Naive thymus-derived CD4-positive, alpha-beta T cell (primary cell): ENCODE measurements at regions of chr1 and their contacts with region 1.

Region 1: GRCh38 chr1:3796215-3797061 is at the start of gene LRRC47:
- DNase-seq: peak; percentile 89 to 97 (median 94)
- ATAC-seq: peak; percentile 100
- H3K4me3 ChIP-seq: peak within 1 kb of the TSS; percentile 74
- H3K4me3 Mint-ChIP-seq: peak within 1 kb of the TSS; percentile 88 to 98 (median 93)
- H3K27ac ChIP-seq: peak within 1 kb of the TSS; percentile 69
- H3K27ac Mint-ChIP-seq: peak within 1 kb of the TSS; percentile 87 to 97 (median 93)
- H3K4me1 ChIP-seq: peaks cover 22 to 28% of the 10 kb centered on the region in 2 donors
- H3K4me1 Mint-ChIP-seq: peaks cover 8 to 52% (median 42%) of the 10 kb centered on the region in 7 donors
- H3K27me3 ChIP-seq: no peaks in the 10 kb centered on the region
- H3K27me3 Mint-ChIP-seq: peaks cover 9 to 11% (median 10%) of the 10 kb centered on the region in 5 donors
- total RNA-seq, gene LRRC47: 38.2 to 60.2 (median 43.9) TPM

Region 2: GRCh38 chr1:3491291-3492246 is 304.9 kb before region 1 on chr1:
- CTCF ChIA-PET with region 1: no interaction called
- POLR2A ChIA-PET with region 1: no interaction called
- intact Hi-C with region 1: no loop called
- DNase-seq: peak; percentile 65 to 90 (median 83)
- ATAC-seq: peak; percentile 96
- H3K4me3 ChIP-seq: no peak overlapping the region
- H3K4me3 Mint-ChIP-seq: peak overlapping the region in 7 of 10 donors; percentile 26 to 76 (median 62)
- H3K27ac ChIP-seq: no peak overlapping the region
- H3K27ac Mint-ChIP-seq: peak overlapping the region in 2 of 9 donors; percentile 28 to 38
- H3K4me1 ChIP-seq: no peaks in the 10 kb centered on the region
- H3K4me1 Mint-ChIP-seq: peaks cover 2 to 7% (median 5%) of the 10 kb centered on the region in 7 donors
- H3K27me3 ChIP-seq: no peaks in the 10 kb centered on the region
- H3K27me3 Mint-ChIP-seq: no peaks in the 10 kb centered on the region

Region 3: GRCh38 chr1:3727042-3727824 is 69.2 kb before region 1 on chr1:
- CTCF ChIA-PET with region 1: no interaction called
- POLR2A ChIA-PET with region 1: no interaction called
- intact Hi-C with region 1: no loop called
- DNase-seq: no peak
- ATAC-seq: peak; percentile 14
- H3K4me3 ChIP-seq: no peak overlapping the region
- H3K4me3 Mint-ChIP-seq: no peak overlapping the region
- H3K27ac ChIP-seq: no peak overlapping the region
- H3K27ac Mint-ChIP-seq: no peak overlapping the region
- H3K4me1 ChIP-seq: no peaks in the 10 kb centered on the region
- H3K4me1 Mint-ChIP-seq: peaks cover 0 to 4% (median 0%) of the 10 kb centered on the region in 7 donors
- H3K27me3 ChIP-seq: no peaks in the 10 kb centered on the region
- H3K27me3 Mint-ChIP-seq: peaks cover 0 to 18% (median 0%) of the 10 kb centered on the region in 5 donors

Region 4: GRCh38 chr1:3746830-3747521 is 49.5 kb before region 1 on chr1:
- CTCF ChIA-PET with region 1: no interaction called
- POLR2A ChIA-PET with region 1: no interaction called
- intact Hi-C with region 1: loop called (anchors 1 kb)
- DNase-seq: peak; percentile 76 to 91 (median 86)
- ATAC-seq: peak; percentile 99
- H3K4me3 ChIP-seq: peak overlapping the region; percentile 52
- H3K4me3 Mint-ChIP-seq: peak overlapping the region; percentile 72 to 87 (median 78)
- H3K27ac ChIP-seq: peak overlapping the region; percentile 71
- H3K27ac Mint-ChIP-seq: peak overlapping the region in 4 of 9 donors; percentile 65 to 88 (median 73)
- H3K4me1 ChIP-seq: peaks cover 7 to 12% of the 10 kb centered on the region in 2 donors
- H3K4me1 Mint-ChIP-seq: peaks cover 15 to 40% (median 33%) of the 10 kb centered on the region in 7 donors
- H3K27me3 ChIP-seq: no peaks in the 10 kb centered on the region
- H3K27me3 Mint-ChIP-seq: peaks cover 0 to 4% (median 0%) of the 10 kb centered on the region in 5 donors

Region 5: DNA sequence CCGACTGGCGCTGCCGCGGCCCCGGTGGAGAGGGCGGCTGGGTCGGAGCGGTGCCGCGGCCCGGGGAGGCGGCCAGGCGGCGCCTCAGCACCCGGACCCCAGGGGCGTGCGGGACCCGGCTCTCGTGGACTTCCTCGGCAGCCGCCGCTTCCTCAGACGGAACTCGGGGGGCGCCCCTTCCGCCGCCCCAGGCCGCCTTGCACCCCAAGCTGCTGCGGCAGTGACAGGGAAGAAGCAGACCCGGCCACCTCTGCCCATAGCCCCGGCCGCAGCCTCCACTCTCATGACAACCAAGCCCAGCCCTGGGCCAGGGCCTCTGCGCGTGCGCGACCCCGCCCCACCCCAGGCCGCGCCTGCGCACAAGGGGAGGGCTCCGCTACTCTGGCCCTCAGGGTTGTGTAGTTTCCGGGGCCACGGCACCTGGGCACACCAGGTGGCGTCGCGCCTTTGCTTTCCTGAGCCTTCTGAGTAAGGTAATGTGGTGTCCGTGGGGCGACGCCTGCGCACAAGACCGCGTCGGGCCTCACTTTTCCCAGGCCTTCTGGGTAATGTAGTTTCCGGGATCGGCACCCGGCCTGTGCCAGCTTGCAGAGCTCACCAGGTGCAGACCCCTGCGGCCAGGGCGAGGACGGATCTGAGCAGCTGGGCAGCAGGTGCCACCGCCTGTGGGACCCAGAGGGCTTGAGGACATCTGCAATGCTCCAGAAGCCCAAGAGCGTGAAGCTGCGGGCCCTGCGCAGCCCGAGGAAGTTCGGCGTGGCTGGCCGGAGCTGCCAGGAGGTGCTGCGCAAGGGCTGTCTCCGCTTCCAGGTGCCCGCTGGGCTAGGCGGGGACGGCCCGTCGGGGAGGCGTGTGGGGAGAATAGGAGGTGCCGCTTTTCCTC is 60.7 kb after region 1 on chr1 and contains the starts of genes CEP104 and DFFB:
- CTCF ChIA-PET with region 1: no interaction called
- POLR2A ChIA-PET with region 1: interaction called, 4 read pairs
- intact Hi-C with region 1: loop called (anchors 1 kb)
- DNase-seq: peak; percentile 98 to 99 (median 98)
- ATAC-seq: peak; percentile 98
- H3K4me3 ChIP-seq: peak within 1 kb of the TSS; percentile 98
- H3K4me3 Mint-ChIP-seq: peak within 1 kb of the TSS; percentile 93 to 99 (median 98)
- H3K27ac ChIP-seq: peak within 1 kb of the TSS; percentile 79
- H3K27ac Mint-ChIP-seq: peak within 1 kb of the TSS; percentile 88 to 97 (median 94)
- H3K4me1 ChIP-seq: peaks cover 17 to 25% of the 10 kb centered on the region in 2 donors
- H3K4me1 Mint-ChIP-seq: peaks cover 15 to 58% (median 41%) of the 10 kb centered on the region in 7 donors
- H3K27me3 ChIP-seq: no peaks in the 10 kb centered on the region
- H3K27me3 Mint-ChIP-seq: no peaks in the 10 kb centered on the region
- total RNA-seq, gene CEP104: 33.7 to 68.0 (median 45.6) TPM
- total RNA-seq, gene DFFB: 13.6 to 27.7 (median 19.2) TPM

Region 6: DNA sequence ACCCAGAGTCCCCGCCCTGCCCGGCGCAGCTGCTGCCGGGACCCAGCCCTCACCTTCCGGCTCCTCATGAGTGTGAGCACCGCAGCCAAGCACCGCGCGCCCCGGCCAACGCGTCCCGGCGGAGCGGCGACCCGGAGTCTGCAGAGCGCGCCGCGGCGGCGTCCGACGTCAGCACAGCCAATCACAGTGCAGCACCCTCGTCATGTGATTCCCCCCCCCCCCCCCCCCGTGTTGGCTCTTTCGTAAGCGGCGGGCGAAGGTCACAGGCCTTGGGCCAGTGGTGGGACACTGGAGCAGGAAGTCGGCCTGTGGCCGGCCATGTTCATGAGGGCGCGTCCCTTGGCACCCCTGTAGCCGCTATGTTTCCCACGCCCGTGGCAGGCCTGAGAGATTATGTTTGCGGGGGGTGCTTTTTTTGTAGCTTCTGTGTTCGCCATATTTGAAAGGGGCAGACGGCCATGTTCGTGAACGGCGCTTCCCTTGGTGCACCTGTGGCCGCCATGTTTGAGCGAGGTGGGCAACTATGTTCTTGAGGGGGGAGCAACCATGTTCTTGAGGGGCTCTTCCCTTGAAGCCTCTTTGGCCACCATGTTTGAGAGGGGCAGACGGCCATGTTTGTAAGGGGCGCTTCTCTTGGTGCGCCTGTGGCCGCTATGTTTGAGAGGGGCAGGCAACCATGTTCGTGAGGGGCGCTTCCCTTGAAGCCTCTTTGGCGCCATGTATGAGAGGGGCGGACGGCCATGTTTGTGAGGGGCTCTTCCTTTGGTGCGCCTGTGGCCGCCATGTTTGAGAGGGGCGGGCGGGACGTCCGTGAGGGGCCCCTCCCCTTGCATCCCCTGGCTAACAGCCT is 103.9 kb after region 1 on chr1 and contains the start of gene C1orf174:
- CTCF ChIA-PET with region 1: no interaction called
- POLR2A ChIA-PET with region 1: interaction called, 5 read pairs
- intact Hi-C with region 1: loop called (anchors 1 kb)
- DNase-seq: peak; percentile 78 to 99 (median 96)
- ATAC-seq: peak; percentile 88
- H3K4me3 ChIP-seq: peak within 1 kb of the TSS; percentile 79
- H3K4me3 Mint-ChIP-seq: peak within 1 kb of the TSS; percentile 90 to 96 (median 94)
- H3K27ac ChIP-seq: peak within 1 kb of the TSS; percentile 94
- H3K27ac Mint-ChIP-seq: peak within 1 kb of the TSS; percentile 92 to 99 (median 96)
- H3K4me1 ChIP-seq: peaks cover 6 to 39% of the 10 kb centered on the region in 2 donors
- H3K4me1 Mint-ChIP-seq: peaks cover 23 to 71% (median 53%) of the 10 kb centered on the region in 7 donors
- H3K27me3 ChIP-seq: no peaks in the 10 kb centered on the region
- H3K27me3 Mint-ChIP-seq: no peaks in the 10 kb centered on the region
- total RNA-seq, gene C1orf174: 17.0 to 33.6 (median 27.1) TPM